Activated CD8-positive, alpha-beta T cell treated with anti-CD3 and anti-CD28 coated beads, Interleukin-2, amount 10 ng/mL, durations not matched to agents 7 days and 5 days (primary cell): ENCODE measurements at regions of chr1 and their contacts with region 1.

Region 1: DNA sequence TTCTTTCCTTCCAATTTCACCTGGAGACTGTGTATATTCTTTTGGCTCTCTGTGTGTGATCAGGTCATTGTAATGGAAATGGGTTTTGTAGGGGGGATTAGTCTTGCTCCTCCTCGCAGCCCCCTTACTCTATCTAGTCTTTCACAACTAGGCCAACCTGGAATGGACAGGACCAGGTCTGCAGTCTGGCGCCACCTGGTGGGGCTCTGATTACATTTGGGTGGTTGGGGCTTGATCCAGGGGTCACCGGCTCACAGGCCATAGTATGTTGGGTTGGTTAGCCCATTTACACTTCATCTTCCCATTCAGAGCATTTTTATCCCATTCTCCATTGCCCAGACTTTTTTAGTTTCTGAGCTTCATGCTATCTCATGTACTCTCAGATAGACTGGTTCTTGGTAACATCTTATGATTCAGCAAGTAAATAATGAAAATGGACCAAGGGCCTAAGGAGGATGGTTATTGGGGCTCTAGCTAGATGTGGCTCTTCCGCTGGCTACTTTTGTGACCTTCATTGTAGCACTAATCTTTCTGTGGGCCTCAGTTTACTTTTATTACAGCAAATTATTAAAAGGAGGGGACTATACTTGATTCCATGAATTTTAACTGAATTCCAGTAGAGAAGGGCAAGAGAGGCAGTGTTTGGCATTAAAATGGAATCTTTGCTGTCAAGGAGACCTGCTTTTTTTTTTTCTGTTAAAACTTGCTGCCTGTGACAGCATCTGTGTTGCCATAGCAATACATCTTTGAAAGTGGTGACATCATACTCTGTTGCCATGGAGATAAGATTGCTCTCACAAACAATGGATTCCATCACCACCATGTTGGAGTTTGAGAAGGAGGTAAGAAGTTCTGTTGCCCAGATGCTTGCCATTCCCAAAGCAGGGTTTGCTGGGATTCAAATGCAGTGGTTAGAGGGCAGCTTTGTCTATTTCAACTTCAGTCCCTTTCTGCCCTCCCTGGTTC is 150.1 kb downstream of the PLXNA2 start:
- DNase-seq: peak; percentile 75
- ATAC-seq: peak; percentile 70
- H3K4me3 Mint-ChIP-seq: no peak overlapping the region
- H3K27ac Mint-ChIP-seq: no peak overlapping the region
- H3K4me1 Mint-ChIP-seq: no peaks in the 10 kb centered on the region
- H3K27me3 Mint-ChIP-seq: no peaks in the 10 kb centered on the region

Region 2: GRCh38 chr1:208045463-208046260 is 48.4 kb before region 1 on chr1:
- CTCF ChIA-PET with region 1: interaction called, 11 read pairs
- POLR2A ChIA-PET with region 1: no interaction called
- DNase-seq: no peak
- ATAC-seq: no peak
- H3K4me3 Mint-ChIP-seq: no peak overlapping the region
- H3K27ac Mint-ChIP-seq: no peak overlapping the region
- H3K4me1 Mint-ChIP-seq: peaks cover 26% of the 10 kb centered on the region
- H3K27me3 Mint-ChIP-seq: peaks cover 3% of the 10 kb centered on the region

Region 3: GRCh38 chr1:208251911-208252835 is 158.1 kb after region 1 on chr1:
- CTCF ChIA-PET with region 1: no interaction called
- POLR2A ChIA-PET with region 1: no interaction called
- DNase-seq: no peak
- ATAC-seq: no peak
- H3K4me3 Mint-ChIP-seq: no peak overlapping the region
- H3K27ac Mint-ChIP-seq: no peak overlapping the region
- H3K4me1 Mint-ChIP-seq: no peaks in the 10 kb centered on the region
- H3K27me3 Mint-ChIP-seq: peaks cover 18% of the 10 kb centered on the region